Colonic mucosa (tissue), 4 donors: ENCODE measurements at regions of chr12 and their contacts with region 1.

Region 1: GRCh38 chr12:80269803-80270552 is 170.6 kb downstream of the OTOGL start:
- DNase-seq: no peak
- H3K4me3 ChIP-seq: no peak overlapping the region
- H3K27ac ChIP-seq: no peak overlapping the region
- H3K4me1 ChIP-seq: no peaks in the 10 kb centered on the region
- H3K27me3 ChIP-seq: no peaks in the 10 kb centered on the region
- CTCF ChIP-seq: peak; percentile 43

Region 2: DNA sequence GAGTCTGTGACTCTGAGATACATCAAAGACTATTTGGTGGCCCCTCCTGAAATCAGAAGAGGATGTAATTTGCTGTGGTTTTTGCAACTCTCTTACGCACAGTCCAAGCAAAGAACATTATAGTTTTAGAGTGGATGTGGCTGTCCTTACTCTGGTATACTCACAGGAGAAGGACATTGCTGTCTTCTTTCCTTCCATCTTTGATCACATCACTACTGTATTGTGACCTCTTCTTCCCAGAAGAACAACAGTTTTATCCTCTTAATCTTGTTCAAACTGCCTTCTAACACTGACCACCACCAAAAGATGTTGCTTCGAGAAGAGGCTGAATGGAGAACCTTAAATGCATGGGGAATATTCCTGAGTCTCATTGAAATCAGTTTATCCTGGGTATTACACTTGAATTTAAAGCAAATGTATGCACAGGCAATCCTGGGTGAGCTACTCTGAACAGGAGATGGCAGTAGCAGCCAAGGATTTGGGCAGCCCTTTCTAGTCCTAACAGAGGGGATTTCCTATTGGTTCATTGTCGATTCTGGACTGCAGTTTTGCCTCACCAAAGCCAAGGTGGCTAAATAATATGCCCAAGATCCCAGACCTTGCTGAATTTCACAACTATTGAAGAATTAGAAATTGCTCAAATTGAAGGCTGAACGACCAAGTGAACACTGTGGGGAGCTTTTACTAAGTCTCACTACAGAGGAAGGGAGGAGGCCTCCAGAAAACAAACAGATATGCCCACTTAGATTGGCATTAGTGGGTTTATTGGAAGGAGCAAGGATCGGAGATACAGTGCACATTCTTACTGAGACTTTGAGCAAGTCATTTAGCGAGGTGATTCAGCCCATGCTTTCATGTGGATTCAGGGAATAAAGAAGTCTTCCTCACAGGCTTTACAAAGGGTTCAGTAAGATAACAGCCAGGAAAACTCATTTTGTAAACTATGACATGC is 862.0 kb before region 1 on chr12:
- intact Hi-C with region 1: loop called (anchors 2 kb)
- DNase-seq: peak; percentile 78
- H3K4me3 ChIP-seq: no peak overlapping the region
- H3K27ac ChIP-seq: no peak overlapping the region
- H3K4me1 ChIP-seq: peaks cover 6% of the 10 kb centered on the region
- H3K27me3 ChIP-seq: no peaks in the 10 kb centered on the region
- CTCF ChIP-seq: peak; percentile 63

Region 3: DNA sequence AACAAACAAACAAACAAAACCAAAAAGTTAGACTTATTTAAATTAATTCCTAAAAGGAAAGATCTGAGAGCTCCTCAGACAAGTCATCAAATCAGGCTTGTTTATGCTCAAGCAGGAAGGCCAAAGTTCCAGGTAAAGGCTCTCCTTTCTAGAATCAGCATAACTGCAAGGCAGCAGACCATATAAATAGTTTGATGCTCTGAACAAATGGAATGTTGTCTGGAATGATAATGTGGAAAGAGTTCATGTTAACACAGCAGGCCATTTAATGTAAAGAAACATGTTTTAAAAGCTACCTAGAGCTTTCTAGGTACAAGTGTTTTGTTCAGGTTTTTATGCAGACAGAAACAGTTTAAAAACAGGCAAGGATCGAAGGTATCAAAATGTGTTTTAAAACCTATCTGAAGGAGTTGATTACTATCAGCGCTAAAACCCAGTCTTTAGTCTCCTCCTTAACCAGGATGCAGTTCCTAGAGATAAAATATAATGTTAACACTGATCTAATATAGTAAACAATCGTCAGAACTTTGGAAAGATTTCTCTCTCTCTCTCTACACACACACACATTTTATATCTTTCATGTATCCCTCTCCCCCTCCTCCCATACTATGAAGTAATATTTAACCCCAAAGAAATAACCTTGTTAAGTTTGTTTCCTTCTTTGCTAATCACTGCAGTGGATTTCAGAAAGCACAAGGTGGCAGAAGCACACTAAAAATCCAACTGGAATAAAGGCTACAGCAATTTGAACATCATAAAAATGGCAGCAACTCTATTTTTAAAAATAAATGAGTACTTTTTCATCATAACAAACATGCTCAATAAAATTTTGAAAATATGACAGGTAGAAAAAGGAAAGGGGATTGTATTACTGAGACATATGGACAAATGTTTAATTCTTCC is 714.7 kb before region 1 on chr12:
- intact Hi-C with region 1: loop called (anchors 10 kb)
- DNase-seq: no peak
- H3K4me3 ChIP-seq: no peak overlapping the region
- H3K27ac ChIP-seq: no peak overlapping the region
- H3K4me1 ChIP-seq: no peaks in the 10 kb centered on the region
- H3K27me3 ChIP-seq: no peaks in the 10 kb centered on the region
- CTCF ChIP-seq: peak; percentile 38

Region 4: GRCh38 chr12:79747274-79747673 is 522.7 kb before region 1 on chr12:
- intact Hi-C with region 1: loop called (anchors 10 kb)
- DNase-seq: no peak
- H3K4me3 ChIP-seq: no peak overlapping the region
- H3K27ac ChIP-seq: no peak overlapping the region
- H3K4me1 ChIP-seq: no peaks in the 10 kb centered on the region
- H3K27me3 ChIP-seq: no peaks in the 10 kb centered on the region
- CTCF ChIP-seq: no peak

Region 5: GRCh38 chr12:80195074-80195726 is 74.8 kb before region 1 on chr12:
- intact Hi-C with region 1: loop called (anchors 5 kb)
- DNase-seq: no peak
- H3K4me3 ChIP-seq: no peak overlapping the region
- H3K27ac ChIP-seq: no peak overlapping the region
- H3K4me1 ChIP-seq: no peaks in the 10 kb centered on the region
- H3K27me3 ChIP-seq: no peaks in the 10 kb centered on the region
- CTCF ChIP-seq: no peak

Region 6: DNA sequence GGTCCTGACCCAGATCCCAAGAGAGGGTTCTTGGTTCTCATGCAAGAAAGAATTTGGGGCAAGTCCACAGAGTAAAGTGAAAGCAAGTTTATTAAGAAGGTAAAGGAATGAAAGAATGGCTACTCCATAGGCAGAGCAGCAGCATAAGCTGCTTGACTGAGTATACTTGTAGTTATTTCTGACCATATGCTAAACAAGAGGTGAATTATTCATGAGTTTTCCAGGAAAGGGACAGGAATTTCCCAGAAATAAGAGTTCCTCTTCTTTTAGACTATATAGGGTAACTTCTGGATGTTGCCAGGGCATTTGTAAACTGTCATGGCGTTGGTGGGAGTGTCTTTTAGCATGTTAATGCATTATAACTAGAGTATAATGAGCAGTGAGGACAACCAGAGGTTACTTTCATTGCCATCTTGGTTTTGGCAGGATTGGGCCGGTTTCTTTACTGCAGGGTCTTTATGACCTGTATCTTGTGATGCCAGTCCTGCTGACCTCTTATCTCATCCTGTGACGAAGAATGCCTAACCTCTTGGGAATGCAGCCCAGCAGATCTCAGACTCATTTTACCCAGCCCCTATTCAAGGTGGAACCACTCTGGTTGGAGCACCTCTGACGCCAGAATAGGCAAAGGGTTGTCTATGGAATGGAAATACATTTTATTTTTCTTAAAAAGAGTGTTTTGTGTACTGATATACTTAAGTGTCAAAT is 56.9 kb before region 1 on chr12:
- intact Hi-C with region 1: no loop called
- DNase-seq: no peak
- H3K4me3 ChIP-seq: no peak overlapping the region
- H3K27ac ChIP-seq: no peak overlapping the region
- H3K4me1 ChIP-seq: no peaks in the 10 kb centered on the region
- H3K27me3 ChIP-seq: no peaks in the 10 kb centered on the region
- CTCF ChIP-seq: no peak

Region 7: GRCh38 chr12:80509781-80510556 is 240.0 kb after region 1 on chr12:
- intact Hi-C with region 1: no loop called
- DNase-seq: no peak
- H3K4me3 ChIP-seq: no peak overlapping the region
- H3K27ac ChIP-seq: no peak overlapping the region
- H3K4me1 ChIP-seq: no peaks in the 10 kb centered on the region
- H3K27me3 ChIP-seq: no peaks in the 10 kb centered on the region
- CTCF ChIP-seq: no peak